SK-N-SH (cell line): ENCODE measurements at regions of chrX and their contacts with region 1.

Region 1: GRCh38 chrX:153667956-153668396 is 5.6 kb downstream of the PNCK start:
- DNase-seq: peak; percentile 87
- H3K4me3 ChIP-seq: peak overlapping the region in 1 of 2 experiments; percentile 35; a peak in 1 of 4 replicates
- H3K27ac ChIP-seq: no peak overlapping the region
- H3K4me1 ChIP-seq: peaks cover 0 to 3% of the 10 kb centered on the region in 2 experiments; a peak in 1 of 4 replicates
- H3K27me3 ChIP-seq: no peaks in the 10 kb centered on the region; the same call in 1 of the 2 replicates
- CTCF ChIP-seq: peak; percentile 79
- EP300 ChIP-seq: no peak
- RAD21 ChIP-seq: peak; percentile 77

Region 2: GRCh38 chrX:153554519-153555167 is 113.3 kb before region 1 on chrX:
- CTCF ChIA-PET with region 1: interaction called, 92 read pairs
- POLR2A ChIA-PET with region 1: interaction called, 3 read pairs
- DNase-seq: peak; percentile 85
- H3K4me3 ChIP-seq: no peak overlapping the region
- H3K27ac ChIP-seq: no peak overlapping the region
- H3K4me1 ChIP-seq: no peaks in the 10 kb centered on the region
- H3K27me3 ChIP-seq: peaks cover 74% of the 10 kb centered on the region
- CTCF ChIP-seq: peak; percentile 77
- EP300 ChIP-seq: no peak
- RAD21 ChIP-seq: peak; percentile 80

Region 3: GRCh38 chrX:153578200-153578835 is 89.7 kb before region 1 on chrX:
- CTCF ChIA-PET with region 1: interaction called, 13 read pairs
- POLR2A ChIA-PET with region 1: no interaction called
- DNase-seq: no peak
- H3K4me3 ChIP-seq: no peak overlapping the region
- H3K27ac ChIP-seq: no peak overlapping the region
- H3K4me1 ChIP-seq: peaks cover 0 to 13% of the 10 kb centered on the region in 2 experiments; a peak in 1 of 4 replicates
- H3K27me3 ChIP-seq: peaks cover 83% of the 10 kb centered on the region
- CTCF ChIP-seq: 0 out of 2 replicates have a peak, but pooled peaks have one; percentile 14
- EP300 ChIP-seq: no peak
- RAD21 ChIP-seq: no peak

Region 4: DNA sequence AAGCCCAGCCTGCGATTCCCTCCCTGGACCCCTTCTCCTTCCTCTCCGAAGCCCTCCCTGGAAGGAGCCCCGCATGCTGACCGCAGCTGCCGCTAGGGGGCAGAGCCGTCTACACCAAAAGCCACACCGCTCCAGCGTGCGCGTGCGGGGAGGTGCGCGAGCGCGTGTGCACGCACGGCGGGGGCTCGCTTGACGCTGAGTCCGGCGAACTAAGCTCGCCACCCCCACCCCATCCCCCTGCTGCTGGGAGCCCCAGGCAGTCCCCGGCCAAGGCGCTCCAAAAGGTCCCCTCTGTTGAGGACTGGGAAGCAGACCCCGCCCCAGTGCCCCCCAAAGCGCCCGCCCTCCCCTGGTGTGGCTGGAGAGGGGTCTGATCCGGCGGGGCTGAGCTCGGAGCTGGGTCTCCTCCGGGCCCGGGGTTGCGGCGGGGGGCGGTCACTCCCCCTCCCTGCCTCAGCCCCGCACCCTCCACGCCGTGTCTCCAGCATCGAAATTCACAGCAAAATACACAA is 58.0 kb before region 1 on chrX:
- CTCF ChIA-PET with region 1: interaction called, 128 read pairs
- POLR2A ChIA-PET with region 1: no interaction called
- DNase-seq: peak; percentile 88
- H3K4me3 ChIP-seq: peak overlapping the region; percentile 35 to 37; a peak in 2 of 4 replicates
- H3K27ac ChIP-seq: peak overlapping the region in 1 of 2 experiments; percentile 64; a peak in 2 of 4 replicates
- H3K4me1 ChIP-seq: peaks cover 0 to 10% of the 10 kb centered on the region in 2 experiments; a peak in 1 of 4 replicates
- H3K27me3 ChIP-seq: peaks cover 55% of the 10 kb centered on the region
- CTCF ChIP-seq: peak; percentile 79
- EP300 ChIP-seq: no peak
- RAD21 ChIP-seq: peak; percentile 73

Region 5: DNA sequence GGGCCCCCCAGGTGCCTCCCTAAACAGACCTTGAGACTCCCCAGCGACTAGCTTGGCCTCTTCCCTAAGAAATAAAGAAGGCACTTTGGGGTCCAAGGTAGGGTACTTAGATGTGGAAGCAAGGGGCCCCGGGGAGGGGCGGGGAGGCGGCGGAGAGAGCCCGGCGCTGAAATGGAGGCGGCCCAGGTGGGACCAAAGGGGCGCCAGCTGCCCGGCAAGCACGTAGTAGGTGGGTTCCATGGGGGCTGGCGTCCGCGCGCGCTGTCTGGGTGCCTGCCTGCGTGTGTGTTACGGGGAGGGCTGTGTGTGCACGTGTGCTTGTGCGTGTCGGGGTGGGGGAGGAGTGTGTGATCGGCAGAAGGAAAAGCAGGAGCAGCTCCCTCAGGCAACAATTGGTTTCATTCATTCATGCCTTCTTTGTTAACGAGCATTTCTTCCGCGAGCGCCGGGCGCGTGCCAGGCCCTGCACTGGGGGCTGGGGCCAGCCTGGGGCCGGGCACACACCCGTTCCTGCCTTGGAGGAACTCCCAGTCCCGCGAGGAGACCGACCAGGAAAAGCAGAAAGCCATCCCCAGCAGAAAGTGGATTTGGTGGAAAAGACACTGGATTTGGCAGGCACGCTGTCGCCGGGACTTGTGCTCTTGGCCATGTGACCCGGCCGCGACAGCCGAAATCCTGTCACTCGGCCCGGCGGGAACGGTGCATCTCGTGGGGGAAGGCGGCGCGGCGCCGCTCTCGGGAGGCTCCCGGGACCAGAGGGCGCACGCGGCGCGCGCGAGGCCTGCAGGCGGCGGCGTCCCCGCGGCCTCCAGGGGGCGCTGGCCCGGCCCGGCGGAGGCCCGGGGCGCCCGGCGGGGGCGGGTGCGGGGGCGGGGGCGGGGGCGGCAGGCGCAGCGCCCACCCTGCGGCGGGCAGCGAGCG is 24.3 kb before region 1 on chrX:
- CTCF ChIA-PET with region 1: interaction called, 106 read pairs
- POLR2A ChIA-PET with region 1: no interaction called
- DNase-seq: peak; percentile 83
- H3K4me3 ChIP-seq: peak overlapping the region; percentile 32 to 35; a peak in 3 of 4 replicates
- H3K27ac ChIP-seq: no peak overlapping the region
- H3K4me1 ChIP-seq: peaks cover 0 to 15% of the 10 kb centered on the region in 2 experiments; a peak in 1 of 4 replicates
- H3K27me3 ChIP-seq: peaks cover 69% of the 10 kb centered on the region
- CTCF ChIP-seq: peak; percentile 26; the same call in 1 of the 2 replicates
- EP300 ChIP-seq: no peak
- RAD21 ChIP-seq: no peak

Region 6: DNA sequence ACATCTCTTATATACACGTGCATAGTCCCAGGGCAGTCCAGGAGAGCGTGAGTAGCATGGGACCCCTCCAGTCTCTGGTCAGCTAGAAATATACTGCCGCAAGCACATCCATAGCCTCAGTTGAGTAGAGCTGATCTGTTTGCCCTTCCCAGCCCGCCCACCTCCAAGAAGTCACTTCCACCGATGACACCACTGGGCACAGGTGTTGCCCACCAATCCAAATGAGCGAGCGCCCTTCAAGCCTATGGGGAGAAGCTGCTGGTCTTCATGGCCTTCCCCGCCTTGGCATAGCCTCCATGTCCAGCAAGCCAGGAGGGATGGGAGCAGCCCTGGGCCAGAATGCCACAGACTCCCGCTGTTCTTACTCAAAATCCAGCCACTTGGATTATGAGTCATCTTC is 10.8 kb before region 1 on chrX:
- CTCF ChIA-PET with region 1: interaction called, 106 read pairs
- POLR2A ChIA-PET with region 1: no interaction called
- DNase-seq: no peak
- H3K4me3 ChIP-seq: no peak overlapping the region
- H3K27ac ChIP-seq: no peak overlapping the region
- H3K4me1 ChIP-seq: no peaks in the 10 kb centered on the region
- H3K27me3 ChIP-seq: peaks cover 10% of the 10 kb centered on the region; the same call in 1 of the 2 replicates
- CTCF ChIP-seq: no peak
- EP300 ChIP-seq: no peak
- RAD21 ChIP-seq: no peak

Region 7: DNA sequence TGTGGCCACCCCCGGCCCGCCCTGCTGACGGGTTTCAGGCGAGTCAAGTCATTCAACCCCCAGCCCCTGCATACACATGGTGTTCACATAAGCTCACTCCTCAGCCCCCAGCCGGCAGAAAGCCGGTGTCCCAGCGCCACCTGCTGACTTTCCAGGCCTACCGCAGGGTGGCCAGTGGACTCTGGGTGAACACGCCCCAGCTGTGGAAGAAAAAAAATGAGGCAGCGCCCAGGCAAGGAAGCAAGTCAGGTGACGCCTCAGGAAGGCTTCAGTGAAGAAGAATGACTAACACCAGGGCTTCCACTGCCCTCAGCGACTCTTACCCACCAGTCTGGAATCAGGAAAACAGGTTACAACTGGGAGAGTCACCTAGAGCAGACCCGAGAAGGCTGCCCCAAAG is 40.4 kb after region 1 on chrX:
- CTCF ChIA-PET with region 1: interaction called, 12 read pairs
- POLR2A ChIA-PET with region 1: no interaction called
- DNase-seq: peak; percentile 83
- H3K4me3 ChIP-seq: no peak overlapping the region
- H3K27ac ChIP-seq: peak overlapping the region in 1 of 2 experiments; percentile 27; a peak in 1 of 4 replicates
- H3K4me1 ChIP-seq: peaks cover 0 to 6% of the 10 kb centered on the region in 2 experiments; a peak in 1 of 4 replicates
- H3K27me3 ChIP-seq: peaks cover 16% of the 10 kb centered on the region; the same call in 1 of the 2 replicates
- CTCF ChIP-seq: peak; percentile 70
- EP300 ChIP-seq: no peak
- RAD21 ChIP-seq: peak; percentile 80